Heart right ventricle (tissue), 16 donors: ENCODE measurements at regions of chr7 and their contacts with region 1.

Region 1: DNA sequence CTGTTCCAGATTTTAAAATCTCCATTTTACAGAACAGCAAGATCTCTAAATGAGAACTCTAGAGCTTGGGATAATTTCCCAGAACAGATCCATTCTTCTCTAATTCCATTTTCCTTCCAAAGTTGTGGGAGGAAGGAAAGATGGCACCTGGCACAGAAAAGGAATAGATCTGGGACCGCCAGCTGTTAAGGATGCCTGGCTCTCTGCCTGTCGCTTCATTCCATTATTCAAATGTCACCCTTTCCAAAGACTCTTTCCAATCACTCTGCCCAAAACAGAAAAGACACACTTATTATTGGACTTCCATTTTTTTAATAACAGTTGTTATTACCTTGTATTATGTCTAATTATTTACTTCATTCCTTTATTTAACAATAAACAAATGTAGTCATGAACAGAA is 751 bp upstream of the OR9A2 start:
- DNase-seq: no peak
- ATAC-seq: no peak
- H3K4me3 ChIP-seq: no peak overlapping the region
- H3K27ac ChIP-seq: no peak overlapping the region
- H3K4me1 ChIP-seq: no peaks in the 10 kb centered on the region
- H3K27me3 ChIP-seq: no peaks in the 10 kb centered on the region
- CTCF ChIP-seq: no peak

Region 2: DNA sequence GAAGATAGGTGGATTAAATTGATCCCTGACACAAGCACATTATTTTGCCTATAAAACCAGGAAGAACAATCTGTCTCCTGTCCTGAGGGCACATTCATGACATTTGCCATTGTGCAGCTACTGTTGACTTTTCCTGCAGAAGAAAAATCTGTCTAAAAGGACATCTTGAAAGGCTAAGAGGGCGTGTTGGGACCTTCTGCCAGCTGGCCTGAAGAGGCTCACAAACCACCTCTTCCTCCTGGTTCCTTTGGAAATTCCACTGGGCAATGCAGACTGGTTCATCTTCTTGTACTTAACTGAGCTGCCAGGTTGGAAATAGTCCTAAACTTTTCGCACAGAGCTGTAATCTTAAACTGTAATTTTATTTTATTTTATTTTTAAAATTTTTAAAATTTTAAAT is 68.5 kb after region 1 on chr7:
- intact Hi-C with region 1: loop called in 1 of 10 experiments (anchors 10 kb)
- DNase-seq: no peak
- ATAC-seq: no peak
- H3K4me3 ChIP-seq: no peak overlapping the region
- H3K27ac ChIP-seq: no peak overlapping the region
- H3K4me1 ChIP-seq: no peaks in the 10 kb centered on the region
- H3K27me3 ChIP-seq: no peaks in the 10 kb centered on the region
- CTCF ChIP-seq: no peak